Activated CD8-positive, alpha-beta T cell treated with anti-CD3 and anti-CD28 coated beads for 36 hours (primary cell): ENCODE measurements at regions of chr18 and their contacts with region 1.

Region 1: GRCh38 chr18:5057386-5058348 is 139.4 kb downstream of the AKAIN1 start:
- DNase-seq: peak; percentile 68
- ATAC-seq: peak; percentile 78
- H3K4me3 Mint-ChIP-seq: no peak overlapping the region
- H3K27ac Mint-ChIP-seq: no peak overlapping the region
- H3K4me1 Mint-ChIP-seq: peaks cover 19% of the 10 kb centered on the region
- H3K27me3 Mint-ChIP-seq: peaks cover 2% of the 10 kb centered on the region
- CTCF ChIP-seq: peak; percentile 77

Region 2: GRCh38 chr18:5073026-5073944 is 15.6 kb after region 1 on chr18:
- CTCF ChIA-PET with region 1: interaction called, 21 read pairs
- POLR2A ChIA-PET with region 1: no interaction called
- intact Hi-C with region 1: no loop called
- DNase-seq: peak; percentile 42
- ATAC-seq: peak; percentile 74
- H3K4me3 Mint-ChIP-seq: no peak overlapping the region
- H3K27ac Mint-ChIP-seq: no peak overlapping the region
- H3K4me1 Mint-ChIP-seq: no peaks in the 10 kb centered on the region
- H3K27me3 Mint-ChIP-seq: peaks cover 2% of the 10 kb centered on the region
- CTCF ChIP-seq: peak; percentile 83